Heart right ventricle (tissue), 16 donors: ENCODE measurements at regions of chr19 and their contacts with region 1.

Region 1: GRCh38 chr19:46009530-46010510 is 13.0 kb downstream of the PGLYRP1 start:
- DNase-seq: peak; percentile 64 to 65
- ATAC-seq: peak; percentile 60 to 87 (median 80)
- H3K4me3 ChIP-seq: no peak overlapping the region
- H3K27ac ChIP-seq: no peak overlapping the region
- H3K4me1 ChIP-seq: peaks cover 0 to 10% (median 5%) of the 10 kb centered on the region in 9 donors
- H3K27me3 ChIP-seq: peaks cover 0 to 31% (median 21%) of the 10 kb centered on the region in 7 donors
- CTCF ChIP-seq: peak; percentile 79 to 90 (median 85)

Region 2: DNA sequence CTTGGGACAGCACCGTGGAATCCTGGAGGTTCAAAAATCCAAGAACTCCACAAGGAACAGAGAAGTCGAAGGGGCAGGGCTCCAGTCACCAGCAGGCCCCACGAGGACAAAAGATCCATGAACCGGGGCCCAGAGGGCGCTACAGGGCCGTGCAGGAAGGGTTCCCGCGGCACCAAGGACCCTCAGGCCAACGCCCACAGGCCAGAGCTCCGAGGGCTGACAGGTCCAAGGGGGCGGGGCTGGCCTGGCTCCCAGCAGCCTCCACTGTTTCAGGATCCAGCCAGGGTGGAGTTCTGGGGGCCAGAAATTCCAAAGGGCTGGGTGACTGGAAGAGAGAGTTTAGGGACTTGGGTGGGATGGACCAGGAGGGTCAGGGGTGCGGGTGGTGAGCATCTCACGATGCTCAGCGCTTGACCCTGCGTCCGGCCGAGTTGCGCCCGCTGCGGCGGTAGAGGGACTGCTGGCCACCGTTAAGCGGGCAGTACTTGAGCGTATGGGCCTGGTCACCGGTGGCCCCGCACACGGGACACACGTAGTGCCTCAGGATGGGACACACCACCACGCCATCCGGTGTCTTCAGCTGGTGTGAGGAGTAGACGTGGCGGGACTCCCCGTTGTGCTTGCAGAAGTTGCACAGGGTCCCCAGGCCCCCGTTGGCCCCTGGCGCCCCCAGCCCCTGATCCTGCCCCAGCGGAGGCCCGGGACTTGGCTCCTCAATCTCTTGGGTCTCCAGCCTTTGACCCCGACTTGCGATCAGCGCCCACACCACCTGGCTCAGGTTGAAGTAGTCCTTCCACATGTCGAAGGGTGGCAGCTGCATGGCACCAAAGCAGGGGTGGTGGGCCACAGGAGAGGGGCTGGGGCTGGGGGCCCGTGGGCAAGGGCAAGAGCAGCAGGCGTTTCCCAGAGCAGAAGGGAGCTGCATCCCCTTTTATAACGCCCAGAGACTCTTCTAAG is 95.7 kb before region 1 on chr19 and contains the start of gene NANOS2:
- intact Hi-C with region 1: loop called in 3 of 10 experiments (anchors 5 to 10 kb)
- DNase-seq: peak in 1 of 2 donors; percentile 34
- ATAC-seq: peak in 4 of 8 donors; percentile 12 to 72 (median 56)
- H3K4me3 ChIP-seq: no peak within 1 kb of the TSS
- H3K27ac ChIP-seq: no peak within 1 kb of the TSS
- H3K4me1 ChIP-seq: no peaks in the 10 kb centered on the region
- H3K27me3 ChIP-seq: peaks cover 0 to 41% (median 28%) of the 10 kb centered on the region in 7 donors
- CTCF ChIP-seq: peak in 5 of 9 donors; percentile 10 to 45 (median 28)
- total RNA-seq, gene NANOS2: not detected

Region 3: DNA sequence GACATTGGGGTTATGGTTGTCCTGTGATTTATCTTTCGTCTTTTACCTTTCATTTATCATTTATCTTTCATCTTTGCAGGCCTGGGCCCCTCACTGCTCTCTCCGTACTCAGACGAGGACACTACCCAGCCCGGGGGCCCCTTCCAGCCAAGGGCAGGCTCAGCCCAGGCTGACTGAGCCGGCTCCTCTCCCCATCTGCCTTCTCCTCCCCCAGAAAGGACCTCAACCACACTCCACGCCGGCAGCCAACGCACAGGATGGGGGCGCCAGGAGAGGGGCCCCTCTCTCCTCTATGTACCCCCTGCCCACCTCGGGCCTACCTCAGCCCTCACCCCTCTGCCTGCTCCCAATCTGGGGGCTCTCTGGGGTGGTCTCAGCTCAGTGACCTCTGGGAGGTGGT is 329.6 kb after region 1 on chr19:
- intact Hi-C with region 1: no loop called
- DNase-seq: no peak
- ATAC-seq: peak in 1 of 8 donors; percentile 1
- H3K4me3 ChIP-seq: no peak overlapping the region
- H3K27ac ChIP-seq: no peak overlapping the region
- H3K4me1 ChIP-seq: no peaks in the 10 kb centered on the region
- H3K27me3 ChIP-seq: no peaks in the 10 kb centered on the region
- CTCF ChIP-seq: no peak